ENCODE measurements at regions of chr11 and their contacts with region 1.

Region 1: DNA sequence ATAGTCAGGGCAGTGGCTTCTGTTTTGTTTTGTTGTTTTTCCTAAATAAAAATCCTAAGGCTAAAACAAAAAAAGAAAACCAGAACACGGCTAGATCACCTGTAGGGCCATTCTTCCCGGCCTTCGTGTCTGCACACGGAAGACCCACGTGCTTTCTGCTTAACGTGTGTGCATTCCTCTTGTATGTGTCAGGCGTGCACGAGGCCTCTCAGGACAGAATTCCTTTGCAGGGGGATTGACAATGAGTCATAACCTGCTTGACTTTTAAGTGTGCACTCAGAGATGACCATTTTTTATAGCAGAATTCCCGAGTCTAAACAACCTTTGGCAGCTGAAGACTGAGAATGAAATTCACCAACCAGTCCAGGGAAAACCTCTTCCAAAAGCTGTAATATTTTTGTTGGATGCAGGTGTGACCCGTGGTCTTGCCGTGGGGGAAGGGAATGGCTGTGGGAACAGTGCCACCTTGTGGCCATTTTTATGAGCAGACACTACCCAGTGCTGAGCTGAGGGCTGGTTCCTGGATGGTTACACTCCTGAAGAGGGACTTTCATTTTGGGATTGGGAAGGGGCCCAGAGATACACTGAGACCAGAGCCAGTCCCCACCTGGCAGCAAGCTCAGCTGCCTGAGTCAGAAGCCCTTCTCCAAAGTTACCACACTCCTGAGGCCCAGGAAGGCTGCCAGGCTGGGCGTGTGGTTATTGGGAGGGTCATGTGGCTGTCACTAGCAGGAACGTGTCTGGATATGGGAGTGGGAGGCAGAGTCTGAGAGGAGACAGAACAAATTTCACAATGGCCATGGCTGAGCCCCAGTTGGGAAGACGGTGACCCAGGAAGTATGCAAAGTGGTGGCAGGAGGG is 35.8 kb upstream of the DKK3 start:
- DNase-seq: peak; percentile 100
- ATAC-seq: peak; percentile 75
- H3K4me3 ChIP-seq: 0 out of 2 replicates have a peak overlapping the region, but pooled peaks have one; percentile 2
- H3K27ac ChIP-seq: peak overlapping the region; percentile 88
- H3K4me1 ChIP-seq: peaks cover 22% of the 10 kb centered on the region
- H3K27me3 ChIP-seq: no peaks in the 10 kb centered on the region
- CTCF ChIP-seq: peak; percentile 90
- POLR2A ChIP-seq: peak; percentile 50; the same call in 1 of the 2 replicates
- RAD21 ChIP-seq: peak; percentile 93

Region 2: DNA sequence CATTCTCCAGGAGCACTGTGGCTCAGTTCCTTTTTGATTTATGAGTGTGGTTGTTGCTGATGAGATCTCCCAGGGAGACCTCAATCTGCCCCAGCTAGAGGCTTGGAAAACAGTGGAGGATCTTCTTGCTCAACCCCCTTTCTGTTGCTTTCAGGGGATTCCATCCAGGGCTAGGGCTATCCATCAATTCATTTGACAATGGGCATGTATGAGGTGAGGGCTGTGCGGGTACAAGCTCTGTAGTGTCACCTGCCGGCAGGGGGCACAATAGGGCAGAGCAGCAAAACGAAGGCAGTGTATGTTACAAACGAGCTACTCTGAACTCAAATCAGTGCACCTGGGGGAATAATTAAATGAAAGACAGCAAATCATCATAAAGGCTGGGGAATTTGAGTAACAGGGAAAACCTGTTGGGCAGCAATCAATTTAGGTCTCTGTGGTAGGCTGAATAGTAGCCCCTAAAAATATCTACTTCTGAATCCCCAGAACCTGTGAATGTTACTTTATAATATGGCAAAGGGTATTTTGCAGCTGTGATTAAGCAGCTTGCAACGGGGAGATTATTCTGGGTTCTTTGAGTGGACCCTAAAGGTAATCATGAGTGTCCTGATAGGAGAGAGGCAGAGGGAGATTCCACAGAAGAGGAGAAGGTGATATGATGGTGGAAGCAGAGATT is 1016.0 kb before region 1 on chr11:
- CTCF ChIA-PET with region 1: no interaction called
- POLR2A ChIA-PET with region 1: no interaction called
- dilution Hi-C with region 1: no loop called
- in situ Hi-C with region 1: loop called (anchors 25 kb)
- intact Hi-C with region 1: no loop called
- DNase-seq: peak; percentile 44
- ATAC-seq: peak; percentile 85
- H3K4me3 ChIP-seq: no peak overlapping the region
- H3K27ac ChIP-seq: no peak overlapping the region
- H3K4me1 ChIP-seq: peaks cover 3% of the 10 kb centered on the region; the same call in 1 of the 2 replicates
- H3K27me3 ChIP-seq: peaks cover 10% of the 10 kb centered on the region
- CTCF ChIP-seq: peak; percentile 72
- POLR2A ChIP-seq: no peak
- RAD21 ChIP-seq: peak; percentile 74

Region 3: GRCh38 chr11:11931461-11932055 is 112.6 kb before region 1 on chr11:
- CTCF ChIA-PET with region 1: interaction called, 13 read pairs
- POLR2A ChIA-PET with region 1: no interaction called
- dilution Hi-C with region 1: no loop called
- in situ Hi-C with region 1: loop called (anchors 10 kb)
- intact Hi-C with region 1: loop called (anchors 1 kb)
- DNase-seq: peak; percentile 74
- ATAC-seq: peak; percentile 53
- H3K4me3 ChIP-seq: no peak overlapping the region
- H3K27ac ChIP-seq: no peak overlapping the region
- H3K4me1 ChIP-seq: peaks cover 3% of the 10 kb centered on the region
- H3K27me3 ChIP-seq: no peaks in the 10 kb centered on the region
- CTCF ChIP-seq: peak; percentile 74
- POLR2A ChIP-seq: no peak
- RAD21 ChIP-seq: peak; percentile 78

Region 4: DNA sequence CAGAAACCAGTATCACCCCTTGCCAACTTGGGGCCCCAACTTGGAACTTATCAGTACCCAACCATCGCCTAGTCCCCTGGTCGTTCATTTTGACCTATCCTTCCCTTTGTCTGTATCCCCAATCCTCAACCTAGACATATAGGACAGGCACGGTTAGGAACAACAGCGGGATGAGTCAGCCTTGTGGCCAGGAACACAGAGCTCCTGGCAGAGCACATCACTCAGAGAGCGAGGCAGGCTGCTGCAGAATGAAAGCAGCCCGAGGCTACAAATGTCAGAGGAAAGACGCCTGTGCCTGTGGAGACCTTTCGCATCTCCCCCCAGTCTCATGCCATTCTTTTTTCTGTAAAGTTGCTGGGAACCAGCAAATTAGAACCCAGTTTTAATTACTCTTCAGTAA is 50.4 kb before region 1 on chr11:
- CTCF ChIA-PET with region 1: interaction called, 3 read pairs
- POLR2A ChIA-PET with region 1: no interaction called
- dilution Hi-C with region 1: no loop called
- in situ Hi-C with region 1: no loop called
- intact Hi-C with region 1: loop called (anchors 2 kb)
- DNase-seq: peak; percentile 86
- ATAC-seq: peak; percentile 83
- H3K4me3 ChIP-seq: no peak overlapping the region
- H3K27ac ChIP-seq: peak overlapping the region; percentile 5; the same call in 1 of the 2 replicates
- H3K4me1 ChIP-seq: peaks cover 25% of the 10 kb centered on the region
- H3K27me3 ChIP-seq: no peaks in the 10 kb centered on the region
- CTCF ChIP-seq: no peak
- POLR2A ChIP-seq: no peak
- RAD21 ChIP-seq: no peak

Region 5: GRCh38 chr11:12075822-12076821 is 31.9 kb after region 1 on chr11:
- CTCF ChIA-PET with region 1: no interaction called
- POLR2A ChIA-PET with region 1: no interaction called
- dilution Hi-C with region 1: no loop called
- in situ Hi-C with region 1: no loop called
- intact Hi-C with region 1: loop called (anchors 1 kb)
- DNase-seq: peak; percentile 100
- ATAC-seq: peak; percentile 81
- H3K4me3 ChIP-seq: peak overlapping the region; percentile 9; the same call in 1 of the 2 replicates
- H3K27ac ChIP-seq: peak overlapping the region; percentile 80
- H3K4me1 ChIP-seq: peaks cover 26% of the 10 kb centered on the region
- H3K27me3 ChIP-seq: no peaks in the 10 kb centered on the region
- CTCF ChIP-seq: no peak
- POLR2A ChIP-seq: peak; percentile 62
- RAD21 ChIP-seq: peak; percentile 17; the same call in 1 of the 2 replicates

Region 6: GRCh38 chr11:12235947-12236743 is 192.0 kb after region 1 on chr11:
- CTCF ChIA-PET with region 1: interaction called, 3 read pairs
- POLR2A ChIA-PET with region 1: no interaction called
- dilution Hi-C with region 1: no loop called
- in situ Hi-C with region 1: loop called (anchors 5 kb)
- intact Hi-C with region 1: loop called (anchors 1 kb)
- DNase-seq: peak; percentile 72
- ATAC-seq: peak; percentile 61
- H3K4me3 ChIP-seq: no peak overlapping the region
- H3K27ac ChIP-seq: peak overlapping the region; percentile 62
- H3K4me1 ChIP-seq: peaks cover 7% of the 10 kb centered on the region
- H3K27me3 ChIP-seq: no peaks in the 10 kb centered on the region
- CTCF ChIP-seq: peak; percentile 68
- POLR2A ChIP-seq: no peak
- RAD21 ChIP-seq: peak; percentile 76